CD8-positive, alpha-beta T cell (primary cell): ENCODE measurements at regions of chr1 and their contacts with region 1.

Region 1: GRCh38 chr1:234588386-234588785 is 21.6 kb downstream of the IRF2BP2 start:
- DNase-seq: no peak
- ATAC-seq: no peak
- H3K4me3 ChIP-seq: no peak overlapping the region
- H3K4me3 Mint-ChIP-seq: no peak overlapping the region
- H3K27ac ChIP-seq: no peak overlapping the region
- H3K27ac Mint-ChIP-seq: no peak overlapping the region
- H3K4me1 ChIP-seq: no peaks in the 10 kb centered on the region
- H3K4me1 Mint-ChIP-seq: no peaks in the 10 kb centered on the region
- H3K27me3 ChIP-seq: peaks cover 0 to 2% of the 10 kb centered on the region in 2 experiments
- H3K27me3 Mint-ChIP-seq: peaks cover 9% of the 10 kb centered on the region
- CTCF ChIP-seq: no peak

Region 2: DNA sequence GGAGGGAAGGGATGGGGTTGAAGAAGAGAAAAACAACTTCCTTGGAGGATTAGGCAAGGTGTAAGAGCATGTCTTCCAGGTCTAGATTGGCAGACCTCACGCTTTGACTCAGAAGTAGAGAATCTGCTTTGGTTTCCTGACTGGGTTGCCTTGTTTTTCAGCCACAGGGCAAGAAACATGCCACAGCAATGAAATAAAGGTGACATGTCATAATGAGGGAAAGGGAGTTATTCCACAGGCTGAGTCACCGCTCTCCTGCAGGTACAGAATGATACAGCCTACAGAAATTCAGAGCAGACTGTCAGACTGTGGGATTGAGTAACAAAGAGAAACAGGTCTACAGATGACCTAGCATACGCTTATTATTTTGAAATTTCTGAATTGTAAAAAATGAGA is 23.7 kb before region 1 on chr1:
- CTCF ChIA-PET with region 1: no interaction called
- POLR2A ChIA-PET with region 1: no interaction called
- intact Hi-C with region 1: loop called in 1 of 2 experiments (anchors 1 kb)
- DNase-seq: no peak
- ATAC-seq: no peak
- H3K4me3 ChIP-seq: no peak overlapping the region
- H3K4me3 Mint-ChIP-seq: no peak overlapping the region
- H3K27ac ChIP-seq: no peak overlapping the region
- H3K27ac Mint-ChIP-seq: no peak overlapping the region
- H3K4me1 ChIP-seq: no peaks in the 10 kb centered on the region
- H3K4me1 Mint-ChIP-seq: no peaks in the 10 kb centered on the region
- H3K27me3 ChIP-seq: no peaks in the 10 kb centered on the region
- H3K27me3 Mint-ChIP-seq: no peaks in the 10 kb centered on the region
- CTCF ChIP-seq: no peak